Activated CD8-positive, alpha-beta T cell treated with anti-CD3 and anti-CD28 coated beads, Interleukin-2, amount 10 ng/mL, durations not matched to agents 7 days and 5 days (primary cell): ENCODE measurements at regions of chr21 and their contacts with region 1.

Region 1: GRCh38 chr21:32716486-32716885 is 11.3 kb downstream of the SYNJ1 start:
- DNase-seq: no peak
- ATAC-seq: no peak
- H3K4me3 Mint-ChIP-seq: no peak overlapping the region
- H3K27ac Mint-ChIP-seq: no peak overlapping the region
- H3K4me1 Mint-ChIP-seq: peaks cover 20% of the 10 kb centered on the region
- H3K27me3 Mint-ChIP-seq: no peaks in the 10 kb centered on the region

Region 2: GRCh38 chr21:32727687-32728455 is 11.4 kb after region 1 on chr21 and contains the start of gene SYNJ1:
- CTCF ChIA-PET with region 1: interaction called, 4 read pairs
- POLR2A ChIA-PET with region 1: interaction called, 10 read pairs
- DNase-seq: peak; percentile 96
- ATAC-seq: peak; percentile 88
- H3K4me3 Mint-ChIP-seq: peak within 1 kb of the TSS; percentile 96
- H3K27ac Mint-ChIP-seq: peak within 1 kb of the TSS; percentile 97
- H3K4me1 Mint-ChIP-seq: peaks cover 31% of the 10 kb centered on the region
- H3K27me3 Mint-ChIP-seq: no peaks in the 10 kb centered on the region
- total RNA-seq, gene SYNJ1: 16.0 to 21.8 TPM